AG04450 (cell line): ENCODE measurements at regions of chr1 and their contacts with region 1.

Region 1: DNA sequence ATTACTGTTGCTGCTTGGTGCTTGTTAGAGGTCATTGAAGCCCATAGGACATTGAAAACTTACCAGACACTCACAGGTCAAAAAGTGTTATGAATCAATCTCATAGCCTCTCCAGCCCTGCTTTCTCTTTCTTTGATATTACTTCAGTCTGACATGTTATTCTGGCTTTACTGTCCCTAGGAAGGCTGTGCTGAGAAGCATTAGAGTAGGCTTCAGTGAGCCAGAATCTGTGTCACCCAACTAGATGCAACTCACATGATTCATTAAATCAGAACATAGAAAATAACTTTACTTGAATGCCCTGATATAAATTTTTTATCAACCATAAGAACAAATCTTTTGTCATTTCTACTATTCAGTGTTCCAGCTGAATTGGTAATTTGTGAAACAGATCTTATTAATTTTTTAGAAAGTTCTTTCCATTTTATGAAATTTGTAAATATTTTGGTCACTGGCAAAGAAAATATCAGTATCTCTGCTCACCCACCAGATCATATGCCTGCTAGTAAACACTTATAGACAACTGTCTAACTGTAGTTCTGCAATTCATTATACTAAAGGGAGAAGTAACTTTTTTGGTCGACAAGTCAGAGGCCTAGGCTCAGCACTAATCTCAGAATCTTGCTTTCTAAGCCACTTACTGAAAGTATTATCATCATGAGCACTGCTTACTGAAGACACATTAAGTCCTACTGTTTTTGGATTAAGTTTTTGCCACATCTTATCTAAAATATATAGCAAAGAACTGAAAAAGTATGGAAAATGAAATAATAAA is 48.2 kb downstream of the RPAP2 start:
- DNase-seq: no peak
- H3K4me3 ChIP-seq: no peak overlapping the region
- H3K27ac ChIP-seq: no peak overlapping the region
- H3K27me3 ChIP-seq: no peaks in the 10 kb centered on the region
- CTCF ChIP-seq: no peak

Region 2: GRCh38 chr1:92259350-92259749 is 87.7 kb before region 1 on chr1:
- CTCF ChIA-PET with region 1: no interaction called
- POLR2A ChIA-PET with region 1: no interaction called
- DNase-seq: no peak
- H3K4me3 ChIP-seq: no peak overlapping the region
- H3K27ac ChIP-seq: no peak overlapping the region
- H3K27me3 ChIP-seq: no peaks in the 10 kb centered on the region
- CTCF ChIP-seq: no peak

Region 3: GRCh38 chr1:92367496-92367895 is 20.4 kb after region 1 on chr1:
- CTCF ChIA-PET with region 1: interaction called, 16 read pairs
- POLR2A ChIA-PET with region 1: no interaction called
- DNase-seq: no peak
- H3K4me3 ChIP-seq: no peak overlapping the region
- H3K27ac ChIP-seq: no peak overlapping the region
- H3K27me3 ChIP-seq: no peaks in the 10 kb centered on the region
- CTCF ChIP-seq: no peak